GM12878 (cell line): ENCODE measurements at regions of chr17 and their contacts with region 1.

Region 1: DNA sequence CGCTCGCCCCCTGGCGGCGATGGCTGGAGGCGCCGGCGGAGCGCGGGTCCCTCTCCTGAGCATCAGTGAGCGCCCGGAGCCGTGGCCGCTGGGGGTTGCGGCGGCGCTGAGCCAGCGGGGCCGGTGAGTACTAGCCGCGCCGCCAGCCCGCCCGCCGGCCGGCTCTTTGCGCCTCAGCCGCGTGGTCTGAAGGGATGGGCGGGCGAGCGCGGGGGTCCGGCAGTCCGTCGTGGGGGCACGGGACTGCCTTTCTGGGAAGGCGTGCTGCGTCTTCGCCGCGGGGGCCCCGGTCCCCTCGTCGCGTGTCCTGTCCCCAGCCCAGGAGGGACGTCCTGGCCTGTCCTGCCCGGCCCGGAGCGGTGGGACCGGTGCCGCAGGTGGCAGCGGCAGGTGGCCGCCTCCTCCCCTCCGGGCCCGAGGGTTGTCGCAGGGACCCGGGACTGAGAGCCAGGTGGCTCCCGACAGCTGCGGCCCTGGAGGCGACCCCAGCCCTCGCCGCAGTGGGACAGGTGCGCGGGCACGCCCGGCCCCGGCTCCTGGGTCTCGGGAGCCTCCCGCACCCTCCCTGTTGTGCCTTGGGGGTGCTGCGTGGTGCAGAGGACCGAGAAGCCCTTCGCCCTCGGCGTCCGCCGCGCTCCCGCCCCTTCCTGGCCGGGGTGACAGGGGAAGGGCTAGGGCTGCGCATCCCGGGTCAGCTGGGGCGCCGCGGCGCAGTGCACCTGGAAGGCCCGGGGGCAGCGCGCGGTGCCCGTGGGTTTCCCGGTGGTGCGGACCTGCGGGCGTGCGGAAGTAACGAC is at the start of gene SPECC1:
- DNase-seq: no peak
- ATAC-seq: peak; percentile 100
- H3K4me3 ChIP-seq: peak within 1 kb of the TSS; percentile 72
- H3K27ac ChIP-seq: no peak within 1 kb of the TSS
- H3K4me1 ChIP-seq: no peaks in the 10 kb centered on the region
- H3K27me3 ChIP-seq: peaks cover 0 to 9% of the 10 kb centered on the region in 2 experiments
- CTCF ChIP-seq: peak in 2 of 3 experiments; percentile 76 to 93; a peak in 4 of 6 replicates
- EP300 ChIP-seq: no peak
- POLR2A ChIP-seq: no peak
- RAD21 ChIP-seq: no peak
- polyA plus RNA-seq, gene SPECC1: 6.4 to 7.9 TPM

Region 2: GRCh38 chr17:19762515-19762961 is 247.0 kb before region 1 on chr17:
- CTCF ChIA-PET with region 1: no interaction called
- POLR2A ChIA-PET with region 1: no interaction called
- RAD21 ChIA-PET with region 1: no interaction called
- SMC1A ChIA-PET with region 1: no interaction called
- in situ Hi-C with region 1: no loop called
- intact Hi-C with region 1: no loop called
- DNase-seq: no peak
- ATAC-seq: peak; percentile 63; the same call in 2 of the 3 replicates
- H3K4me3 ChIP-seq: no peak overlapping the region
- H3K27ac ChIP-seq: no peak overlapping the region
- H3K4me1 ChIP-seq: peaks cover 3% of the 10 kb centered on the region
- H3K27me3 ChIP-seq: no peaks in the 10 kb centered on the region
- CTCF ChIP-seq: peak; percentile 32 to 50 (median 41); a peak in 5 of 6 replicates
- EP300 ChIP-seq: no peak
- POLR2A ChIP-seq: no peak
- RAD21 ChIP-seq: peak; percentile 45

Region 3: GRCh38 chr17:19958023-19958422 is 51.5 kb before region 1 on chr17:
- CTCF ChIA-PET with region 1: no interaction called
- POLR2A ChIA-PET with region 1: no interaction called
- RAD21 ChIA-PET with region 1: no interaction called
- SMC1A ChIA-PET with region 1: no interaction called
- in situ Hi-C with region 1: loop called (anchors 5 kb)
- intact Hi-C with region 1: no loop called
- DNase-seq: no peak
- ATAC-seq: no peak
- H3K4me3 ChIP-seq: no peak overlapping the region
- H3K27ac ChIP-seq: no peak overlapping the region
- H3K4me1 ChIP-seq: no peaks in the 10 kb centered on the region
- H3K27me3 ChIP-seq: no peaks in the 10 kb centered on the region
- CTCF ChIP-seq: no peak
- EP300 ChIP-seq: no peak
- POLR2A ChIP-seq: no peak
- RAD21 ChIP-seq: no peak

Region 4: DNA sequence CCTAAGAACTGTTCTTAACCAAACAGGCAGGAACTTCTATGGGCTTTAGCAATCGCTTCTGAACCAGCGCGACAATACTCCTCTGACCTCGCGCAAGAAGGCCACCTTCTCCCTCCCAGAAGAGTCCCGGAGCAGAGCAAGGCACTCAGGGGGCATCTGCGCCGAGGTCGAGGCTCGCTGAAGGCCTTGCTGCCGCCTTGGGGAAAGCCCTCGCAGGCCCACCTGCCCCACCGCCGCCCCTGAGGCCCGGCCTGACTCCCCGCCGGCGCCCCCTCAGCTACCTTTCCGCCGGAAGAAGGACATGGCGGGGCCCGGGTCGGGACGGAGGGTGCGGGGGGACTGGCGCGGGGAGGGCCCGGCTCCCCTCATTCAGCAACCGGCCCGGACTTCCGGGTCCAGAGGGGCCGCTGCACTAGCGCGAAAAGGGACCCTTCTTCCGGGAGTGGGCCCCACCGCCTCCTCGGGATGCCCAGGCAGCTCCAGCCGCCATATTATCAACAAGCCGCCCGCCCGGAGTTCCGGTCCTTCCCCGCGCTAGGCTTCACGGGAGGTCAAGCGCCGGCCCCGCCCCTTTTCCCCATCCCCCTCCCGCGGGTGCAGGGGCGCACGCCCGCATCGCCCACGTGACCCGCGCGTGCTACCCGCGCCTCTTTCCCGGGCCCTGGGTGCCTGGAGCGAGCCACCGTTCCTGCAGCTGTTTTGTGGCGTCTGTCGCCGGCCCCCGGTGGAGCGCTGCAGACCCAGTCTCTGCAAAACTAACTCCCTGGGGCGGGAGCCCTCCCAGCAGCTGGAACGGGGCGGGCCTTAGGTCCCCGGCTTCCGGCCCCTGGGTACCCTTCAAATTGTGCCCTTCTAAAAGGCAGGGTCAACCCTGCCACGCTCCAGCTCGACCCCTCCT is 31.9 kb before region 1 on chr17 and contains the start of gene AKAP10:
- CTCF ChIA-PET with region 1: interaction called, 10 read pairs
- POLR2A ChIA-PET with region 1: no interaction called
- RAD21 ChIA-PET with region 1: no interaction called
- SMC1A ChIA-PET with region 1: no interaction called
- in situ Hi-C with region 1: no loop called
- intact Hi-C with region 1: no loop called
- DNase-seq: peak; percentile 60
- ATAC-seq: peak; percentile 95
- H3K4me3 ChIP-seq: peak within 1 kb of the TSS; percentile 73
- H3K27ac ChIP-seq: peak within 1 kb of the TSS; percentile 93
- H3K4me1 ChIP-seq: peaks cover 6% of the 10 kb centered on the region; the same call in 1 of the 2 replicates
- H3K27me3 ChIP-seq: no peaks in the 10 kb centered on the region
- CTCF ChIP-seq: 0 out of 6 replicates have a peak, but pooled peaks of 1 of the 3 experiments have one; percentile 1
- EP300 ChIP-seq: 0 out of 4 replicates have a peak, but pooled peaks of 1 of the 2 experiments have one; percentile 7
- POLR2A ChIP-seq: peak; percentile 93
- RAD21 ChIP-seq: no peak
- polyA plus RNA-seq, gene AKAP10: 4.3 to 5.1 TPM